Kidney (tissue), 22 donors: ENCODE measurements at regions of chr13 and their contacts with region 1.

Region 1: GRCh38 chr13:76903544-76904162 is 17.4 kb upstream of the KCTD12 start:
- DNase-seq: peak in 4 of 5 donors; percentile 74 to 85 (median 80)
- H3K4me3 ChIP-seq: no peak overlapping the region
- H3K27ac ChIP-seq: no peak overlapping the region
- H3K4me1 ChIP-seq: no peaks in the 10 kb centered on the region
- H3K27me3 ChIP-seq: no peaks in the 10 kb centered on the region
- CTCF ChIP-seq: peak; percentile 98

Region 2: GRCh38 chr13:76473552-76474134 is 430.0 kb before region 1 on chr13:
- intact Hi-C with region 1: loop called (anchors 10 kb)
- DNase-seq: peak; percentile 44 to 88 (median 82)
- H3K4me3 ChIP-seq: no peak overlapping the region
- H3K27ac ChIP-seq: no peak overlapping the region
- H3K4me1 ChIP-seq: no peaks in the 10 kb centered on the region
- H3K27me3 ChIP-seq: no peaks in the 10 kb centered on the region
- CTCF ChIP-seq: peak; percentile 67

Region 3: DNA sequence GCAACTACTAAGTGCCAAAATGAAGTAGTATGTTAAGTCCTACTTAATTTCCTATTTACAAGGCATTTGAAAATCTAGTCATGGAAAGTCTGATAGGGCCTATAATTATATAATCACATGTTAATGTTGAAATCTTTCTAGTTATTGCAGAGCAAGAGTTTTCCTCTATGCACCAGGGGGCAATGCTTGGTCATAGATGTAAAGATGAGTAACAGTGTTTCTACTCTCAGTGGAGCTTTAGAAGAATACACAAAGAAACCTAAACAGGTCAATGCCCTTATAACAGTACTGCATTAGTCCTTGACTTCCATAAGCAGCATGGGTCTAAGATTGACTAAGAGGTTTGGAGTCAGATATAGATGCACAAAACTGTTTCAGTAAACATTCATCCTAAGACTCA is 236.1 kb before region 1 on chr13:
- intact Hi-C with region 1: loop called (anchors 10 kb)
- DNase-seq: peak in 2 of 5 donors; percentile 29 to 62
- H3K4me3 ChIP-seq: no peak overlapping the region
- H3K27ac ChIP-seq: no peak overlapping the region
- H3K4me1 ChIP-seq: no peaks in the 10 kb centered on the region
- H3K27me3 ChIP-seq: no peaks in the 10 kb centered on the region
- CTCF ChIP-seq: peak; percentile 29

Region 4: DNA sequence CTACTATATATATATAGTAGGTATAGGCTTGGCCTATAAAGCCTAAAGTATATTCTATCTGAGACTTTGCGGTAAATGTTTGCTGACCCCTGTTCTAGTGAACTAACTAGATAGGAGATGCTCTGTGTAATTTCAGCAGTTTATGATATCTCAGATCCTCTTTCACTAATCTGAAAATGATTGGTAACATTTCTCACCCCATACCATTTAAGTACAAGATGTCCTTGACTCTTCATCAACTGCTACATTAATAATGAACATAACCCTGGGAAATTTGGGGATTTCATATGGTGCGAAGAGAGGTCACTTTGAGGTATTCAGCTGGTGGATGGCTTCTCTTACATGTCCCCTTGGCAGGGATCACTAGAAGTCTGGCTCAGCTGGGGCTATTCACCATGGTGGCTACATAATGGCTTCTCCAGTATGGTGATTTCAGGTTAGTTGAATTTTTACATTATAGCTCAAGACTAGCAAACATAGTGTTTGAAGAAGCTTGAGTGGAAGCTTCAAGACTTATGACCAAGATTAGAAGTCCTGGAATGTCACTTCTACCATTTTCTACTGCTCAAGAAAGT is 526.8 kb after region 1 on chr13:
- intact Hi-C with region 1: no loop called
- DNase-seq: no peak
- H3K4me3 ChIP-seq: no peak overlapping the region
- H3K27ac ChIP-seq: no peak overlapping the region
- H3K4me1 ChIP-seq: no peaks in the 10 kb centered on the region
- H3K27me3 ChIP-seq: no peaks in the 10 kb centered on the region
- CTCF ChIP-seq: no peak